Activated T-helper 1 cell treated with anti-CD3 and anti-CD28 coated beads, Interleukin-12 subunit alpha, Interleukin-12 subunit beta, Interleukin-2, Interleukin-4 antibody, amounts not matched to agents 30 ng/mL and 10 ng/mL and 1 ng/mL, durations not matched to agents 14 hours and 24 hours and 36 hours (primary cell): ENCODE measurements at regions of chr18 and their contacts with region 1.

Region 1: DNA sequence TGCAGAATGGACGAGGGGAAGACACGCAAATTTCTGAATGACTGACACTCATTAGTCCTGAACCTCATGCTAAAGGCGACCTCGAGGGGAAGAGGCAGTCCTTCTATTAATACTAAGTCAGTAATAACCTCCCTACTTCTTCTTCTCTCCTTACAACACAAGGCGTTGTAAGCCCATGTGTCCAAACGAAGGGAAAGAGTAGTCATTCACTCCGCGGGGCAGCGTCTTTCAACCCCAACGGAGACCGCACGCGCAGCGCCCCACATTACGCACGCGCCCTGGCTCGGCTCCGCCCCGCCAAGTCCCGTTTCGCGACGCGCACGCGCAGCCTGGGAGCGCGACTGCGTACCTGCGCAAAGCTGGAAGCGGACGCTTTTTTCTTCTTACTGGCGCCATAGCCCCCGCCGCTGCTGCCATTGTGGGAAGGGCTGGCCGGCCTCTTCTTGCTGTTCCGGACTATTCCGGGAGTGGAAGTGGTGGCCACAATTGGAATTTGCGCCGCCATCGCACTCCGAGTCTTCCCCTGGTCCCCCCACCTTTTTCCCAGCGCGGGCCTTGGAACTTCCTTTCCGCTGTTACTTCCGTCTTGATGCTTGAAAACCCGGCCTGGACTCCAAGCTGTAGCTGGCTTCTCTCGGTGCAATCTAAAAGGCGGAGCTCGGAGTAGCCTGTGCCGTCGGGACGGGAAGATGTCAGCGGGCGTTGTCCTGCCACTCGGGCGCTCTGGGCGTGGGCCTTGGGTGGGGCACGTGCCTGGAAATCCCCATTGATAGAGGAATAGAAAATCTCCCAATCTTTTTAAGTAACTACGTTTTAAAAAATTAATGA is at the start of gene INO80C:
- DNase-seq: peak; percentile 92
- H3K4me3 Mint-ChIP-seq: peak within 1 kb of the TSS; percentile 92
- H3K27ac Mint-ChIP-seq: peak within 1 kb of the TSS; percentile 98
- H3K4me1 Mint-ChIP-seq: peaks cover 44% of the 10 kb centered on the region
- H3K27me3 Mint-ChIP-seq: no peaks in the 10 kb centered on the region
- total RNA-seq, gene INO80C: 35.2 and 43.7 TPM in 2 replicates

Region 2: GRCh38 chr18:34985963-34986362 is 511.6 kb before region 1 on chr18:
- intact Hi-C with region 1: loop called (anchors 1 kb)
- DNase-seq: no peak
- H3K4me3 Mint-ChIP-seq: no peak overlapping the region
- H3K27ac Mint-ChIP-seq: no peak overlapping the region
- H3K4me1 Mint-ChIP-seq: no peaks in the 10 kb centered on the region
- H3K27me3 Mint-ChIP-seq: peaks cover 14% of the 10 kb centered on the region

Region 3: DNA sequence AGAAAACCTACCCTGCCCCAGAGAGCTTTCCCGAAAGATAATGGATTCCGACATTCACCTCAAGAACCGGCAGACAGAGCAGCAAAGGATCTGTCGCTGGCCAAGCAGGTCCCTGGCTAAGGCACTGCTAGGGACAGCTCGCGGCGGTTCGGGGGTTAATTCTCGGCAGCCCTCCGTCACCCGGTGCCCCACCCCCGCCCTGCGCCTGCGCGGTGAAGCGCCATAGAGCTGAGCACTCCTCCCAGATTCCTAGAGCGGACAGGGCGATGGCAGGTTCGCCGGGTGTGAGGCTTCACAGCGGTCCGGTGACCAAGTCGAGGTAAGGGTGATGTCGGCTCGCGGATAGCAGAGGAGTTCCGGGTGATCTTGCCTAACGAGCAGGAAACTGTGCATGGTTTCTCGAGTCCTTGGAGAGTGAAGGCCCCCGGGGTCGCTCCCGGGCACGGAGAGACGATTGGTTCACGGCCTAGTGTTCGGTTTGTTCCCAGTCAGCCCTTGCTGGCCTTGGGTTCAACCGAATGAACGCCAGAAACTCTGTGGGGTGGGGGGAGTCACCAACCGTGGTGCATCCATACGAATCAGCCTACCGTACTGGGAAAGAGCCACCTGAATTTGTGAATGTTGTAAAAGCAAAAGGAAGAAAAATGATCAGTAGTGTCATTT is 207.4 kb before region 1 on chr18 and contains the start of gene ZSCAN30:
- intact Hi-C with region 1: loop called (anchors 1 kb)
- DNase-seq: peak; percentile 94
- H3K4me3 Mint-ChIP-seq: peak within 1 kb of the TSS; percentile 100
- H3K27ac Mint-ChIP-seq: peak within 1 kb of the TSS; percentile 99
- H3K4me1 Mint-ChIP-seq: peaks cover 49% of the 10 kb centered on the region
- H3K27me3 Mint-ChIP-seq: no peaks in the 10 kb centered on the region
- total RNA-seq, gene ZSCAN30: 10.2 and 11.0 TPM in 2 replicates

Region 4: GRCh38 chr18:35478520-35479435 is 18.8 kb before region 1 on chr18:
- intact Hi-C with region 1: loop called (anchors 1 kb)
- DNase-seq: no peak
- H3K4me3 Mint-ChIP-seq: no peak overlapping the region
- H3K27ac Mint-ChIP-seq: peak overlapping the region; percentile 82
- H3K4me1 Mint-ChIP-seq: peaks cover 11% of the 10 kb centered on the region
- H3K27me3 Mint-ChIP-seq: no peaks in the 10 kb centered on the region

Region 5: GRCh38 chr18:35564795-35565453 is 67.3 kb after region 1 on chr18:
- intact Hi-C with region 1: no loop called
- DNase-seq: no peak
- H3K4me3 Mint-ChIP-seq: no peak overlapping the region
- H3K27ac Mint-ChIP-seq: no peak overlapping the region
- H3K4me1 Mint-ChIP-seq: no peaks in the 10 kb centered on the region
- H3K27me3 Mint-ChIP-seq: peaks cover 7% of the 10 kb centered on the region

Region 6: GRCh38 chr18:35616664-35617423 is 119.3 kb after region 1 on chr18:
- intact Hi-C with region 1: loop called (anchors 1 kb)
- DNase-seq: peak; percentile 45
- H3K4me3 Mint-ChIP-seq: no peak overlapping the region
- H3K27ac Mint-ChIP-seq: no peak overlapping the region
- H3K4me1 Mint-ChIP-seq: peaks cover 19% of the 10 kb centered on the region
- H3K27me3 Mint-ChIP-seq: no peaks in the 10 kb centered on the region

Region 7: DNA sequence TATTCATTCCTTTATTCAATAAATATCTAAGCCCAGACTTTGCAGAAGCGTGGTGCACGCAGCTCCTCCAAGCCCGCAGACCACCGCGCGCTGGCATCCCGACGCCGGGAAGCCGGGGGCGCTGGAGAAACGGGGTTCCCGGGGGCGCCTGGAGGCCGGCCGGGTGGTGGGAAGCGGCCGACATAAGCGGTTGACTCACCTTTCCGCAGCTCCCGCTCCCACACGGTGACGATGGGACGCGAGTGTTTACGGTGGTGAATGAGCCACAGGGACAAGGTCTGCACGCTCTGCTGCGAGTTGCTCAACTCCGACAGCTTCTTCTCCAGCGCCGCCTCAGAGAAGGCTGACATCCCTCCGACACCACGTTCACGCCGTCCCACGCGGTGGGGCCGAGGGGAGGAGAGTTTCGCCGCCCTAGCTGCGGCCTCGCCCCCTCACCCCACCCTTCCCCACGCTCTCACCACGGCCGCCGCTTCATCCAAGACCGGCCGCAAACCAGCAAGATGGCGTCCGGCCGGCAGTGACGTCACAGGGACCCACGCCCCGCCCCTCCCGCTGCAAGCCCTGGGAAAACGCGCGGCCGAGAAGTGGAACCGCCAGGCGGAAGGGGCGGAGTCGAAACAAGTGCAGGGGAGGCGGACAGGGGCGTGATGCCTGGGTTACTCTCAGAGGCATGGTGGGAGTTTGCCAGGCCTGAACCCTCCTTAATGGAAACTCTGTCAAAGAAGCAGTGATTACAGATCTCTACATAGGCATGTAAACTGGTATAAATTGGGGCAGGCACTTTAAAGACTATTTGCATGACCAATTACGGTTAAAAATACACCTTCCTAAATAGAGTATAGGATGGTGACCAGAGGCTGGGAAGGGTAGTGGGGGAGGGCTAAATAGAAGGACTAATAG is 569.7 kb after region 1 on chr18 and contains the start of gene RPRD1A:
- intact Hi-C with region 1: loop called (anchors 1 kb)
- DNase-seq: peak; percentile 94
- H3K4me3 Mint-ChIP-seq: peak within 1 kb of the TSS; percentile 90
- H3K27ac Mint-ChIP-seq: peak within 1 kb of the TSS; percentile 91
- H3K4me1 Mint-ChIP-seq: peaks cover 31% of the 10 kb centered on the region
- H3K27me3 Mint-ChIP-seq: peaks cover 3% of the 10 kb centered on the region
- total RNA-seq, gene RPRD1A: 20.5 and 24.8 TPM in 2 replicates